ENCODE measurements at regions of chr9 and their contacts with region 1.

Region 1: DNA sequence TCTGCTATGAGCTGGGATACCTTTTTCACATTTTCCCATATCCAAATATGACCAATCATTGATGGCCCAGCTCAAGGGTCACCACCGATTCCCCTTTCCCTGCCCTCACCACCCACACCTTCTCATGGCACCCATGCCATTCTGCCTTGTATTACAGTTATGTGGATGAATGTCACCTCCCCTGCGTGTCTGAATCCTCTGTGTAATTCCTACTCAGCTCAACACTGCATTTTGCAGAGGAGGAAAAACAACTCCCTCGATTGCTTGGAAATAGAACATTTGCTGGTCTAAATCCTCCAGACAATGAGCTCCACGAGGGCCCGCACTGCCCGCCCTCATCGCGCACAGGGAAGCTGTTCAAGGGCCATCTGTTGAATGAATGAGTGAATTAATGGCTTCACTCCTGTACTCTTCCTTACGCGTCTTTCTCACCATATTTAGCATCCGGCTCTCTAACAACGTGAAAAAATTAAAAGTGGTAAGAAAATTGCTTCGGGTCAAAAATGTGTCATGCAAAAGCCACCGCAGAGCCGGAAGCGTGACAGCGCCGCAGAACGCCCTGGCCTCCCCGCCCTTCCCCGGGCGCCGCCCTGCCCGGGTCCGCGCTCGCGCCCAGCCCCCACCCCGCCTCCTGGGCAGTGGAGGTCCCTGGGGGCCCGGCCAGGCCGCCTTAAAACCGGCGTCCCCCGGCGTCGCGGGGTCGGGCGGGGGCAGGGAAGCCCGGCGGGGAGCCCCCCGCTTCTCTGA is 706 bp downstream of the SUSD1 start:
- DNase-seq: peak; percentile 84 to 85
- ATAC-seq: peak; percentile 76 to 91 (median 82)
- H3K4me3 ChIP-seq: peak overlapping the region; percentile 33
- H3K4me3 Mint-ChIP-seq: peak overlapping the region; percentile 92
- H3K27ac ChIP-seq: peak overlapping the region; percentile 50
- H3K27ac Mint-ChIP-seq: peak overlapping the region; percentile 94 to 96
- H3K4me1 ChIP-seq: peaks cover 69% of the 10 kb centered on the region
- H3K4me1 Mint-ChIP-seq: peaks cover 78 to 89% of the 10 kb centered on the region in 2 donors
- H3K27me3 ChIP-seq: no peaks in the 10 kb centered on the region
- H3K27me3 Mint-ChIP-seq: no peaks in the 10 kb centered on the region
- CTCF ChIP-seq: no peak

Region 2: DNA sequence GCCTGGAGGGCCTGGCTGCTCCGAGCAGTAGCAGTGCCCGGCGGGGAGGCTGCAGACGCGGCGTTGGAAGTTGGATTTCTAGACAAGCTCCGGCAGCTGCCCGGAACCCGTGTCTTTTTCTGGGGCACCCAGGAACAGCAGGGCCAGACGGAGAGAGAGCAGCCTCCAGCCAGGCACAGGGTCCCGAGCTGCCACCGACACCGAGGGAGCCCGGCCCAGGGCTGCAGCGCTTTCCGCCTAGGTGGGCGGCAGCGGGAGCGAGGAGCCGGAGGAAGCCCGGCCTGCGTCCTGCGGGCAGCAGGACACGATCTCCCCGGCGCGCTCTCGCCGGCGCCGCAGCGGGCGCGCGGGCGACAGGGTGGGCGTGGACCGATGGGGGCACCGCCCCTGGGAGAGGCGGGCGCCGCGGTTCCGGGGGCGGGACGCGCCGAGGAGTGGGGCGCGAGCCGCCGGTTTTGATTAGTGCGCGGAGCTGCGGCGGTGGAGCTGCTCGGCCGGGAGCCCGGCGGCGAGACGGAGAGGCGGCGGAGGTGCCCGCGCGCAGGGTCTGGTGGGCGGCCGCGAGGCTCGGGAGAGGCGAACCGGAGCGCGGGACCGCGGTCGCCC is 277.9 kb before region 1 on chr9 and contains the start of gene UGCG:
- intact Hi-C with region 1: loop called (anchors 1 kb)
- DNase-seq: peak; percentile 92 to 93
- ATAC-seq: peak; percentile 92 to 98 (median 95)
- H3K4me3 ChIP-seq: peak within 1 kb of the TSS; percentile 95
- H3K4me3 Mint-ChIP-seq: peak within 1 kb of the TSS; percentile 99
- H3K27ac ChIP-seq: peak within 1 kb of the TSS; percentile 80
- H3K27ac Mint-ChIP-seq: peak within 1 kb of the TSS in 1 of 2 donors; percentile 91
- H3K4me1 ChIP-seq: peaks cover 10% of the 10 kb centered on the region
- H3K4me1 Mint-ChIP-seq: peaks cover 9 to 12% of the 10 kb centered on the region in 2 donors
- H3K27me3 ChIP-seq: no peaks in the 10 kb centered on the region
- H3K27me3 Mint-ChIP-seq: no peaks in the 10 kb centered on the region
- CTCF ChIP-seq: no peak
- total RNA-seq, gene UGCG: 17.9 to 21.4 (median 18.8) TPM

Region 3: DNA sequence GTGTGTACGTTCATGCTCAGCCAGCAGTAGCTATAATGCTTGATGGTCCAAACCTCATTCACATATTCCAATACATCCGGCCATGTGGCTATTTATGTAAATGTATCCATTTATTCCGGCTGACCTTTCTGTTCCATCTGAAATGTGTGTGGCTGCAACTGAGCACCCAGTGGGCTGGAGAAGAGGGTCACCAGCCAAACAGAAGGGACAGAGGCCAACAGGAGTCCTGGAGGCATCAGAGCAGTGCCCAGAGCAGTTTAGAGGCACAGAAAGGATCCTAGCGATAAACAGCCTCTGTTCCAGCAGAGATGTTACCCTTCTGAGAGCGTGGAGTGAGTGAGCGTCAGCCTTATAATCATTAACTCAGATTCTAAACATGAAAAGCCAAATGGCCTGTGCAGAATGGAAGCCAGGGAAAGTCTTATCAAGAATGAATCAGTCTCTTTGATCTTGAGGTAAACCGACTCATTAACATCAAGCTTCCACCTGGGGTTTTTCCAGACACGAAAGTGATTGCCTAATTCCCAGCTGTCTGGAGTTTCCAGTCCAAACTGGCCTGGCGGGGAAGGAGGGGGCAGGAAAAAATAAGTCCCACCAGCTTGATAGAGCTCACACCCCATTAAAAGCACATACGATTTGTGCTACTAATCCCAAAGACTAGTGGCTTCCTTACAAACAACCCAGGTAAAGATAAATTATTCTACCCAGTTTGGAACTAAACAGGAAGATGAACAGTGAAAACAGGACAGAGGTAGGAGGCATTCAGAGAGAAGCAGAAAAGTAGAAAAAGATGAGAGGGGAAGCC is 55.0 kb before region 1 on chr9:
- intact Hi-C with region 1: loop called (anchors 5 kb)
- DNase-seq: no peak
- ATAC-seq: no peak
- H3K4me3 ChIP-seq: no peak overlapping the region
- H3K4me3 Mint-ChIP-seq: no peak overlapping the region
- H3K27ac ChIP-seq: no peak overlapping the region
- H3K27ac Mint-ChIP-seq: no peak overlapping the region
- H3K4me1 ChIP-seq: peaks cover 4% of the 10 kb centered on the region
- H3K4me1 Mint-ChIP-seq: peaks cover 33 to 36% of the 10 kb centered on the region in 2 donors
- H3K27me3 ChIP-seq: no peaks in the 10 kb centered on the region
- H3K27me3 Mint-ChIP-seq: no peaks in the 10 kb centered on the region
- CTCF ChIP-seq: no peak

Region 4: GRCh38 chr9:112249277-112249676 is 74.9 kb after region 1 on chr9:
- intact Hi-C with region 1: no loop called
- DNase-seq: no peak
- ATAC-seq: no peak
- H3K4me3 ChIP-seq: no peak overlapping the region
- H3K4me3 Mint-ChIP-seq: no peak overlapping the region
- H3K27ac ChIP-seq: no peak overlapping the region
- H3K27ac Mint-ChIP-seq: peak overlapping the region; percentile 63 to 78
- H3K4me1 ChIP-seq: no peaks in the 10 kb centered on the region
- H3K4me1 Mint-ChIP-seq: peaks cover 25 to 32% of the 10 kb centered on the region in 2 donors
- H3K27me3 ChIP-seq: no peaks in the 10 kb centered on the region
- H3K27me3 Mint-ChIP-seq: no peaks in the 10 kb centered on the region
- CTCF ChIP-seq: no peak

Region 5: GRCh38 chr9:112750111-112750767 is 575.8 kb after region 1 on chr9 and contains the start of gene SNX30:
- intact Hi-C with region 1: loop called (anchors 10 kb)
- DNase-seq: peak; percentile 75 to 89
- ATAC-seq: peak; percentile 79 to 95 (median 89)
- H3K4me3 ChIP-seq: peak within 1 kb of the TSS; percentile 64
- H3K4me3 Mint-ChIP-seq: peak within 1 kb of the TSS; percentile 91
- H3K27ac ChIP-seq: peak within 1 kb of the TSS; percentile 78
- H3K27ac Mint-ChIP-seq: peak within 1 kb of the TSS; percentile 85 to 89
- H3K4me1 ChIP-seq: peaks cover 47% of the 10 kb centered on the region
- H3K4me1 Mint-ChIP-seq: peaks cover 53 to 59% of the 10 kb centered on the region in 2 donors
- H3K27me3 ChIP-seq: no peaks in the 10 kb centered on the region
- H3K27me3 Mint-ChIP-seq: no peaks in the 10 kb centered on the region
- CTCF ChIP-seq: no peak
- total RNA-seq, gene SNX30: 8.5 to 10.5 (median 9.3) TPM